ENCODE measurements at regions of chr14 and their contacts with region 1.

Region 1: DNA sequence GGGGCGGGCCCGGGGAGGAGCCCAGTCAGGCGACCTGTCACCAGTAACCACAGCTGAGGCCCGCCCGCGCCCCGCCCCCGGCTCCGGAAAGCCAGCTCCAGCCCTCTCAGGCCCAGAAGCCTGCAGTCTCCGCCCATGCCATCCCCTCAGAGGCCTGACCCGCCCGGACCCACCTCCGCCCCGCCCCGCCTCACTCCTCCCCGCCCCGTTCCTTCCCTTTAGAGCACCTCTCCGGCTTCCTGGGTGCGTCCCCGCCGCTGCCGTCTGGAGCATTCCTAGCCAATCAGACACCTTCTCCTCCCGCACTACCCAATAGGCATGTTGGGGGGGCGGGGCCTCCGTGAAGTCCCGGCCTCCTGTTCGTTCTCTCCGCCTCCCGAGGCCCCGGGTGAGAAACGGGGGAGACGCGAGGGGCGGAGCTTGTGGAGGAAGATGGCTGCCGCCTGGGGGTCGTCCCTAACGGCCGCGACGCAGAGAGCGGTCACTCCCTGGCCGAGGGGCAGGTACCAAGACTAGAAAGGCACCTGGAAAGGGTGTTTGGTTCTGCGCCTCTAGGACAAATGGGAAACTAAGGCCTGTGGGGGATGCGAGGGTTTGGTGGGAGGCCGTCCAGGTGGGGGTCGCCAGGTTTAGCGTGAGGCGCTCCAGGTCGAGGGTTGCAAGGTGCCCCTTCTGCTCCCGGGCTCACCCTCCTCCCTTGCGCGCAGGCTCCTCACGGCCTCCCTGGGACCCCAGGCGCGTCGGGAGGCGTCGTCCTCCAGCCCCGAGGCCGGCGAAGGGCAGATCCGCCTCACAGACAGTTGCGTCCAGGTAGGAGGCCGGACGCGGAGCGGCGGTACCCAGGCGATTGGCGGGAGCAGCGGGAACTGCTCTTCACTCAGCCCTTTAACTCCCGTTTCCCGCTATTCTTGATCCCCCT is at the start of gene ISCA2:
- DNase-seq: peak; percentile 98
- H3K4me3 ChIP-seq: peak within 1 kb of the TSS; percentile 97
- H3K27ac ChIP-seq: peak within 1 kb of the TSS; percentile 65
- H3K27me3 ChIP-seq: no peaks in the 10 kb centered on the region
- CTCF ChIP-seq: no peak
- polyA plus RNA-seq, gene ISCA2: 28.2 and 45.6 TPM in 2 replicates

Region 2: DNA sequence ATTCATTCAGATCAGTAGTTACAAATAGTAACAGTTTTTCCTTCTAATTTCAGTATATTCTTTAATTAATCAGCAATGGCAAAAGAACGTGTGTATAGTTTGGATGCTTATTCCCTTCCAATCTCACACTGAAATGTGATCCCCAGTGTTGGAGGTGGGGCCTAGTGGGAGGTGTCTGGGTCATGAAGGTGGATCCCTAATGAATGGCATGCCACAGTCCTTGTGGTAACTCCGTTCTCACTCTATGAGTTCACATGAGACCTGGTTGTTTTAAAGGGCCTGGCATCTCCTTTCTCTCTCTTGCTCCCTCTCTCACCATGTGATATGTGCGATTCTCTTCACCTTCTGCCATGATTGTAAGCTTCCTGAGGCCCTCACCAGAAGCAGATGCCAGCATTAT is 48.7 kb before region 1 on chr14:
- CTCF ChIA-PET with region 1: interaction called, 10 read pairs
- POLR2A ChIA-PET with region 1: interaction called, 7 read pairs
- DNase-seq: no peak
- H3K4me3 ChIP-seq: no peak overlapping the region
- H3K27ac ChIP-seq: no peak overlapping the region
- H3K27me3 ChIP-seq: peaks cover 32% of the 10 kb centered on the region
- CTCF ChIP-seq: no peak

Measured in AG04450 (cell line).